CD4-positive, alpha-beta memory T cell (primary cell): ENCODE measurements at regions of chr1 and their contacts with region 1.

Region 1: GRCh38 chr1:26363549-26364448 is 8.8 kb downstream of the ZNF683 start:
- DNase-seq: peak; percentile 78 to 84 (median 79)
- H3K4me3 ChIP-seq: no peak overlapping the region
- H3K4me3 Mint-ChIP-seq: peak overlapping the region in 6 of 8 donors; percentile 54 to 82 (median 64)
- H3K27ac ChIP-seq: no peak overlapping the region
- H3K27ac Mint-ChIP-seq: peak overlapping the region in 6 of 7 donors; percentile 27 to 88 (median 70)
- H3K4me1 ChIP-seq: peaks cover 70% of the 10 kb centered on the region
- H3K4me1 Mint-ChIP-seq: peaks cover 31 to 81% (median 52%) of the 10 kb centered on the region in 4 donors
- H3K27me3 ChIP-seq: no peaks in the 10 kb centered on the region
- H3K27me3 Mint-ChIP-seq: no peaks in the 10 kb centered on the region

Region 2: DNA sequence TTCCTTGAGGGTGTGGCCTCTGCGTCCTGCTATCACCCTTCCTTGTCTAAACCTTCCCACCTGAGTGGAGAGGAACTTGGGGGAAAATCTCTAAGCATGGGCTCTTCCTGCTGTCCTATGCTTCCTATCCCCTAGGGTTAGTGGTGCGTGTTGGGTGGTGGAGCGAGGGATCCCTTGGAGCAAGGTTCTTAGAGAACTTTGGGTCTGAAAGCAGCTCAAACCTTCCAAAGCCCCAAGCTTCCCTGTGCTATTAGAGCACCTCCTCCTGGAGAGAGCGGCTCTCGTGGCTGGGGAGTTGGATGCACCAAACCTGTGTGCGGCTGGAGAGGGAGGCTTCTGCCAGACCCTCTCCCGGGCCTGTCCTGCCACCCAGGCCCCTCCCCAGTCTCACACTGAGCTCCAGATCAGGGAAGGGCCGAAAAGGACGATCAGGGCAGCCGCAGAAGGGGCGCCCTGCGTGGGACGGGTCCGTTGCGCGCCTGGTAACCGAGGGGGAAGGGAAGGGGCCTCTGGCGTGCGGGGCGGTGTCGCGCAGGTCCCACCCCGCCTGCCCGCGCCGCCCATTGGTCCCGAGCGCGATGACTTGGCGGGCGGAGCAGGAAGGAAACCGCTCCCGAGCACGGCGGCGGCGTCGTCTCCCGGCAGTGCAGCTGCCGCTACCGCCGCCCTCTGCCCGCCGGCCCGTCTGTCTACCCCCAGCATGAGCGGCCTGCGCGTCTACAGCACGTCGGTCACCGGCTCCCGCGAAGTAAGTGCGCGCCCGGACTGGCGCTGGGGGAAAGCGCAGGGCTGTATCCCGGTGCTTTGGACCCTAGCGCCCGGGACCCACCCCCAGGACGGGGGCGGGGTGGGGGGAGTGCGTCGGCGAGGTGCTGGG is 84.1 kb before region 1 on chr1 and contains the start of gene SH3BGRL3:
- CTCF ChIA-PET with region 1: interaction called, 307 read pairs
- POLR2A ChIA-PET with region 1: interaction called, 61 read pairs
- intact Hi-C with region 1: loop called (anchors 1 kb)
- DNase-seq: peak; percentile 83 to 88 (median 86)
- H3K4me3 ChIP-seq: peak within 1 kb of the TSS; percentile 50 to 92
- H3K4me3 Mint-ChIP-seq: peak within 1 kb of the TSS; percentile 85 to 96 (median 90)
- H3K27ac ChIP-seq: peak within 1 kb of the TSS; percentile 82
- H3K27ac Mint-ChIP-seq: peak within 1 kb of the TSS; percentile 94 to 98 (median 97)
- H3K4me1 ChIP-seq: peaks cover 88% of the 10 kb centered on the region
- H3K4me1 Mint-ChIP-seq: peaks cover 58 to 90% (median 76%) of the 10 kb centered on the region in 4 donors
- H3K27me3 ChIP-seq: no peaks in the 10 kb centered on the region
- H3K27me3 Mint-ChIP-seq: no peaks in the 10 kb centered on the region
- total RNA-seq, gene SH3BGRL3: 293 to 305 TPM

Region 3: DNA sequence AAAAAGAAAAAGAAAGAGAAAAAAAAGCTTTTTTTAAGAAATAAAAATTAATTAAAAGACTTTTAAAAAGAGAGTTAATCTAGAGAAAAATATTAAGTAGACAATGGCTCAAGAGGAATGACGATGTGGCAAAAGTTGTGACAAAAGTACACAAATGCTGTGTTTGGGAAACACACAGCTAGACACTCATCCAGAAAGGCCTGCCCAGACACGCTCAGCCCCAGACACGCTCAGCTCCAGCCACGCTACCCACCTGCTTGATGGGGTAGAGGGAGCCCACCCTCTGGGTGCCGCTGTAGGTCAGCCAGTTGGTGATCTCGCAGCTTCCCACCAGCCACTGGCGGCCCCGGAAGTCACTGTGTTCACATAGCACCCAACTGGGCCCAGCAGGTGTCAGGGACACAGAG is 35.8 kb before region 1 on chr1:
- CTCF ChIA-PET with region 1: interaction called, 34 read pairs
- POLR2A ChIA-PET with region 1: interaction called, 32 read pairs
- intact Hi-C with region 1: no loop called
- DNase-seq: no peak
- H3K4me3 ChIP-seq: no peak overlapping the region
- H3K4me3 Mint-ChIP-seq: no peak overlapping the region
- H3K27ac ChIP-seq: no peak overlapping the region
- H3K27ac Mint-ChIP-seq: peak overlapping the region in 2 of 7 donors; percentile 47 to 83
- H3K4me1 ChIP-seq: peaks cover 5% of the 10 kb centered on the region
- H3K4me1 Mint-ChIP-seq: peaks cover 5 to 15% (median 6%) of the 10 kb centered on the region in 4 donors
- H3K27me3 ChIP-seq: no peaks in the 10 kb centered on the region
- H3K27me3 Mint-ChIP-seq: no peaks in the 10 kb centered on the region

Region 4: GRCh38 chr1:26349188-26349876 is 14.5 kb before region 1 on chr1:
- CTCF ChIA-PET with region 1: interaction called, 15 read pairs
- POLR2A ChIA-PET with region 1: interaction called, 3 read pairs
- intact Hi-C with region 1: no loop called
- DNase-seq: no peak
- H3K4me3 ChIP-seq: no peak overlapping the region
- H3K4me3 Mint-ChIP-seq: no peak overlapping the region
- H3K27ac ChIP-seq: no peak overlapping the region
- H3K27ac Mint-ChIP-seq: no peak overlapping the region
- H3K4me1 ChIP-seq: no peaks in the 10 kb centered on the region
- H3K4me1 Mint-ChIP-seq: peaks cover 0 to 3% (median under 1%) of the 10 kb centered on the region in 4 donors
- H3K27me3 ChIP-seq: no peaks in the 10 kb centered on the region
- H3K27me3 Mint-ChIP-seq: no peaks in the 10 kb centered on the region

Region 5: DNA sequence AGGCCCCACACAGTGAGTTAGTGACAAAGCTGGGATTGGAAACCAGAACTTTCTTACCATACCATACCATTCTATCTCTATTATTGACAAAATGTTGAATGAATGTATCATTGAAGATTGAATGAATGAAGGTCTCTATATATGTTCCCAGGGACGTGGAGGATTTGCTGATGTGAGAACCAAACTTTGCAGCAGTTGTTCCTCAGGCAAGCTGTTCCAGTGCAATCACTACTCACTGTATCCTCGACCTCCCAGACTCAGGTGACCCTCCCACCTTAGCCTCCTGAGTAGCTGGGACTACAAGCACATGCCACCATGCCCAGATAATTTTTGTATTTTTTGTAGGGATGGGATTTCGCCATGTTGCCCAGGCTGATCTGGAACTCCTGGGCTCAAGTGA is 35.2 kb after region 1 on chr1:
- CTCF ChIA-PET with region 1: interaction called, 121 read pairs
- POLR2A ChIA-PET with region 1: no interaction called
- intact Hi-C with region 1: loop called (anchors 1 kb)
- DNase-seq: no peak
- H3K4me3 ChIP-seq: no peak overlapping the region
- H3K4me3 Mint-ChIP-seq: no peak overlapping the region
- H3K27ac ChIP-seq: no peak overlapping the region
- H3K27ac Mint-ChIP-seq: no peak overlapping the region
- H3K4me1 ChIP-seq: no peaks in the 10 kb centered on the region
- H3K4me1 Mint-ChIP-seq: peaks cover 3 to 6% (median 5%) of the 10 kb centered on the region in 4 donors
- H3K27me3 ChIP-seq: no peaks in the 10 kb centered on the region
- H3K27me3 Mint-ChIP-seq: peaks cover 8 to 9% of the 10 kb centered on the region in 2 donors